Activated naive CD4-positive, alpha-beta T cell treated with anti-CD3 and anti-CD28 coated beads for 36 hours (primary cell): ENCODE measurements at regions of chr7 and their contacts with region 1.

Region 1: DNA sequence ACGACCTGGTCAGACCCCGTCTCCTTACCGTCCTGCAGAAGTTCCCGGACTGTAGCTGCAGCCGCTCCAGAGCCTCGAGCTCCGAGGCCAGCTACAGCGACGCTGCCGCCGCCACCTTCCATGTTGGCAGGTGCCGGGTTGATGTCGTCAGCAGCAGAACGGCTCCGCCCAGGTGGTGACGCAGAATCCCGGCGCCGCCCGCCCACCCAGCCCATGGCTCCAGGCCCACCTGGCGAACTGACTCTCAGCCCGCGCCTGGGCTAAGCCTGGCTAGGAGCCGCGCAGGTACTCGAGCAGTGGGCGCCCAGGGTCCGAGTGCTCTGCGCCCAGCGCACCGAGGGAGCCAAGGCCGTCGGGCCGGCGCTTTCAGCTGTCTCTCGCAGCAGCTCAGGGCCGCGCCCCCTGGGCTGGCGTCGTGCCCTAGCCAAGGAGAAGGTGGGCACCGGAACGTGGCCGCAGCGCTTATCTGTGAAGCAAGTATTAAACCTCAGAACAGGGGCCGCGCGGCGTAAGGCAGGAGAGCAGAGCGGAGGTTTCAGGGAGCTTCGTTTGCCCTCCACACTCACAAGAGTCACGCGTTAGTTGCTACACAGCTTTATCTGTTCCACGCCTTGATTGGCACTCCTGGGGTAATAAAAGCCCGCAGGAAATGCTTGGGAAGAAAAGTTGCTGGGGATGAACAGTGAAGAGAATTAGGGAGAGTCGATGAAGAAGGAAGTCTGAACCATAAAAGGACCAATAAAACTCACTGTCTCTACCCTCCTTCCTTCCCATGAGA is at the starts of genes COG5 and DUS4L:
- DNase-seq: peak; percentile 87
- H3K4me3 Mint-ChIP-seq: peak within 1 kb of the TSS; percentile 82
- H3K27ac Mint-ChIP-seq: peak within 1 kb of the TSS; percentile 92
- H3K4me1 Mint-ChIP-seq: peaks cover 61% of the 10 kb centered on the region
- H3K27me3 Mint-ChIP-seq: no peaks in the 10 kb centered on the region
- total RNA-seq, gene COG5: 52.0 to 62.8 TPM
- total RNA-seq, gene DUS4L: 10.8 to 12.3 TPM

Region 2: DNA sequence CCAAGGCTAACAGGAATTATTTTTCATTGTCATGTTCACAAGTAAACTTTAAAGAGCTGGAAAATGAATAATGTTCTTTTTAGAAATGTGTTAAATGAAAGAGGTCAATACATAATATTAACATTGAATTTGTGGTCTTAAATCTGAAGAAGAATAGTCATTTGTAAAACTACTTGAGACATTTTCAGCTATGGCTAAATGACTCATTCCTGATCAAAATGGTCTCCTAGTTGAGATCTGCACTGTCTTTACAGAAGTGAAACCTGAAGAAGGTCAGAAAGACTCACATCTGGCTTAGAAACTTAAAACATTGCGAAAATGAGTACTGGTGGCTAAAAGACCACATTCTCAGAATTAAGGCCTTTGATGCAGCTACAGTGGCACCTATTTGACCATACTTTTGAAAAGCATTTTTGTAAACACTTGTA is 693.0 kb before region 1 on chr7:
- CTCF ChIA-PET with region 1: no interaction called
- intact Hi-C with region 1: loop called (anchors 1 kb)
- DNase-seq: no peak
- H3K4me3 Mint-ChIP-seq: no peak overlapping the region
- H3K27ac Mint-ChIP-seq: peak overlapping the region; percentile 12
- H3K4me1 Mint-ChIP-seq: peaks cover 56% of the 10 kb centered on the region
- H3K27me3 Mint-ChIP-seq: no peaks in the 10 kb centered on the region

Region 3: DNA sequence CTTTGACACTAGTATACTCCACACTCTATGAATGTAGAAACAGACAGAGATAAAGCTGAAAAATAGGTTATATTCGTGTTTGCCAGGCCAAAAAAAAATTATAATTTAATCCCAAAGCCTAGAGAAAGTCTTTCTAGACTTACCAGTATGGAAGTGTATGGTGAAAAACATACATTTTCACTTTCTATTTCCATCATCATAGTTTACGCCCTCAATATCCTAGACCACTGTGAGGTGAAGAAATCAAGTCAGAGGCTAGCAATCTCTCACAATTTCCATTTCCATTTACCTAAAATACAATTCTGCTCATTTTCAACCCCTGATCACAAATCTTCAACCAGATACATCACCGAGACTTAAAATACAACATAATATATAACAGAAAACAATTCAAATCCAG is 77.9 kb before region 1 on chr7:
- CTCF ChIA-PET with region 1: no interaction called
- intact Hi-C with region 1: no loop called
- DNase-seq: no peak
- H3K4me3 Mint-ChIP-seq: no peak overlapping the region
- H3K27ac Mint-ChIP-seq: no peak overlapping the region
- H3K4me1 Mint-ChIP-seq: peaks cover 17% of the 10 kb centered on the region
- H3K27me3 Mint-ChIP-seq: no peaks in the 10 kb centered on the region

Region 4: DNA sequence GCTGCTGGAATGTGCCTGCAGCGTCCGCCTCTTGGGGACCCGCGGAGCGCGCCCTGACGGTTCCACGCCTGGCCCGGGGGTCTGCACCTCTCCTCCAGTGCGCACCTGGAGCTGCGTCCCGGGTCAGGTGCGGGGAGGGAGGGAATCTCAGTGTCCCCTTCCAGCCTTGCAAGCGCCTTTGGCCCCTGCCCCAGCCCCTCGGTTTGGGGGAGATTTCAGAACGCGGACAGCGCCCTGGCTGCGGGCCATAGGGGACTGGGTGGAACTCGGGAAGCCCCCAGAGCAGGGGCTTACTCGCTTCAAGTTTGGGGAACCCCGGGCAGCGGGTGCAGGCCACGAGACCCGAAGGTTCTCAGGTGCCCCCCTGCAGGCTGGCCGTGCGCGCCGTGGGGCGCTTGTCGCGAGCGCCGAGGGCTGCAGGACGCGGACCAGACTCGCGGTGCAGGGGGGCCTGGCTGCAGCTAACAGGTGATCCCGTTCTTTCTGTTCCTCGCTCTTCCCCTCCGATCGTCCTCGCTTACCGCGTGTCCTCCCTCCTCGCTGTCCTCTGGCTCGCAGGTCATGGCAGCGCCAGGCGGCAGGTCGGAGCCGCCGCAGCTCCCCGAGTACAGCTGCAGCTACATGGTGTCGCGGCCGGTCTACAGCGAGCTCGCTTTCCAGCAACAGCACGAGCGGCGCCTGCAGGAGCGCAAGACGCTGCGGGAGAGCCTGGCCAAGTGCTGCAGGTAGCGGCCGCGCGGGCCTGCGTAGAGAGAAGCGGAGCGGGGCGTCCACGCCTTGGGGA is 97.3 kb after region 1 on chr7:
- CTCF ChIA-PET with region 1: interaction called, 3 read pairs
- intact Hi-C with region 1: loop called (anchors 1 kb)
- DNase-seq: peak; percentile 69
- H3K4me3 Mint-ChIP-seq: peak overlapping the region; percentile 86
- H3K27ac Mint-ChIP-seq: no peak overlapping the region
- H3K4me1 Mint-ChIP-seq: peaks cover 26% of the 10 kb centered on the region
- H3K27me3 Mint-ChIP-seq: peaks cover 31% of the 10 kb centered on the region

Region 5: GRCh38 chr7:107816011-107816566 is 252.1 kb after region 1 on chr7:
- CTCF ChIA-PET with region 1: no interaction called
- intact Hi-C with region 1: loop called (anchors 5 kb)
- DNase-seq: no peak
- H3K4me3 Mint-ChIP-seq: no peak overlapping the region
- H3K27ac Mint-ChIP-seq: peak overlapping the region; percentile 1
- H3K4me1 Mint-ChIP-seq: peaks cover 32% of the 10 kb centered on the region
- H3K27me3 Mint-ChIP-seq: peaks cover 2% of the 10 kb centered on the region

Region 6: DNA sequence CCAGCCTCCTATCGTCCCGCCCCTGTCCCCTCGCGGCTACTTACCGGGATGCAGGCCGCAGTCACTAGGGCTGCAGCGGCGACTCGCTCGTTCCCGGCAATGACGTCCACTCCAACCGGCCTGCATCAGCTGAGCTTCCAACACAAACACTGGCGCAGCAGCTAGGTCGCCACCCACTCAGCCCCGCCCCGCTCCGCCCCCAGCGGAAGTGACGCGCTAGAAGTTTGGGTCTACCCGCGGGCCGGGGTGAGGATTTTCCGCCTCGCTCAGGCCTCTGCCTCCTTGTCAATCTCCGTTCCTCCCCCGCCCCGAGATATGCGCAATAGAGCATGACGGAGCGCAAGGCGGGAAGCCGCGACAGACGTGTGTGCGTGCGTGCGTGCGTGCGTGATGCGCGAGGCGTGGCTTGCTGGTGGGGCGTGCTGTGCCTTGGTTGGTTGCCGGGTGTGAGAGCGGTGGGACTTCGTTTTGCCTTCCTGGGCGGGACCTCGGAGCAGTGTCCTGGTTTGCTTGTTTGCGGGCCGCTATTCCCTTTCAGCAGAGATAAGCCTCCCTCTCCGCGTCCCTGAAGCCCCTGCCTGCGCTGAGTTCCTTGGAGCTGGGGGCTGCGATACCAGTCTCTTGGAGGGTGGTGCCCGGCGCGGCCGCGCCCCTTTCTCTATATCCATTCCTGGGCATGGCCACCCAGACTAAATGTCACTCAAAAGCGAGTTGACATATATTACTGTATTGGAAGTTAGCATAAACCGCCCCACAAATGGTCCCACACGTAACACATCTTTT is 962.2 kb after region 1 on chr7 and contains the start of gene PNPLA8:
- CTCF ChIA-PET with region 1: no interaction called
- intact Hi-C with region 1: loop called (anchors 5 kb)
- DNase-seq: peak; percentile 100
- H3K4me3 Mint-ChIP-seq: peak within 1 kb of the TSS; percentile 92
- H3K27ac Mint-ChIP-seq: peak within 1 kb of the TSS; percentile 97
- H3K4me1 Mint-ChIP-seq: peaks cover 36% of the 10 kb centered on the region
- H3K27me3 Mint-ChIP-seq: no peaks in the 10 kb centered on the region
- total RNA-seq, gene PNPLA8: 18.8 to 18.9 TPM